Activated CD4-positive, alpha-beta T cell treated with anti-CD3 and anti-CD28 coated beads for 36 hours (primary cell): ENCODE measurements at regions of chr9 and their contacts with region 1.

Region 1: DNA sequence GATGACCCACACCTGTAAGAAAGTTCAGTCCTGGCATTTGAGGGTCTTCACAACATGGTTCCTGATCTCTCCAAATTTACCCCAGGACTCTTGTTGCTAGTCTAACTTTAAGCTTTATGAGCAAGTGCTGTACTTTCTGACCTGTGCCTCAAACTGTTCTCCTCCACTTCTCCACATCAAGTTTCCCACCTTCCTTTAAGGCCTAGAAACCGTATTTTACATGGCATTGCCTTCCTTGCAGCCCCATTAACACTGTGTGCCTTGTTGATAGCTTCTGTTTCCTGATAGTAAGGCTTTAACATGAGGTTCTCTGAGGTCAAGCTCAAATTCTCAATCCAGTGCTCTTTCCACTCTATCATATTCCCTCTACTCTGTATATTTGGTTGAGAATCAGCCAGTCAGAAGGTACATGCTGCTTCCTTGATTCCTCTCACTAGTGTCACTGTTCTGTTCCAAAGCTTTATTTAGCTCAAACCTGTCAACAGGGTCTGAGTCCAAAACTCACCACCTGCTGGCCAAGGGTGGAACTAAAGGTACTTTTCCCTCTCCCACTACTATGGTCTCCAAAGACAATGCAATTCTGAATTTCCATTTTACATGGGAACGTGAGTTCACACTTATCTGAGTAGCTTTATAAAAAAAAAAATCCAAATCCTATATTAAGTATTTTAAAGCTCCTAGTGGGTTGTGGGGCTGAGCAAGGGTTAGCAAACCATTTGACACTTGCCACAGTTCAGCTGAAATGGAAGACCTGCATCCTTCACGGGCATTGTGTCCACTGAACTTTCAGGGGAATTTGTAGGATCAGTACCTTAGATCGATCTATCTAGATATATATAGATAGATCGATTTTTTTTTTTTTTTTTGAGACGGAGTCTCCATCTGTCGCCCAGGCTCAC is 21.1 kb downstream of the VCP start:
- DNase-seq: peak; percentile 76
- ATAC-seq: peak; percentile 87
- H3K4me3 Mint-ChIP-seq: no peak overlapping the region
- H3K27ac Mint-ChIP-seq: peak overlapping the region; percentile 15
- H3K4me1 Mint-ChIP-seq: no peaks in the 10 kb centered on the region
- H3K27me3 Mint-ChIP-seq: no peaks in the 10 kb centered on the region

Region 2: DNA sequence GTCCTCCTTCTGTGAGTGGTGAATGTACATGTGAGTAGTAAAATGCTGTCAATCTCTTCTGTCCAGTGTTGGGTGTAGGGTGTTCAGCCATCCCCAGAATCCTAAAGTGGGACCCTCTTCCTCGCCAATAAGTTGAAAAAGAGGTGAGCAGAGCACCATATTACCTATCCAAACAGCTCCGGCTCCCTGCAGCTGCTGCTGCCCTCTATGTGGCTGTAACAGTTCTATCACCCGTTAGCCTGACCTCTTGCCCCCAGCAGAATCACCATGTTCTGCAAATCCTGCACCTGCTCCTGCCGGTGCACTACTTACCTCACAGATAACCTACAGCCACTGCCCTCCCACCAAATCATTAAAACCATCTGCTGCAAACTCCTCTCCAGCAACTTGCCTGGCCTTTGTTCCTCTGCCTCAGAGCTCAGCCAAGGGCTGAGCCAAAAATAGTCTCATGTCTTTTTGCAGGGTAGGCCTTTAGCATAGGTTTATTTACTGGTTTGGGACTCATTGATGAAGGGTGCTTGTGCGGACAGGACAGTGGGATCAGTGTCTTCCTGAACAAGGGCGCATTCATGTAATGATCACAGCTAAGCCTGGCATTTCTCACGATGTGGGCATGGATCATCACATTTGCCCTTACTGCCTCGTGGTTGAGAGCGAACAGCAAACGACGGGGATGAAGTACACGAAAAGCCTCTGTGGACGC is 291.7 kb before region 1 on chr9:
- CTCF ChIA-PET with region 1: interaction called, 5 read pairs
- POLR2A ChIA-PET with region 1: no interaction called
- intact Hi-C with region 1: loop called in 1 of 2 experiments (anchors 1 kb)
- DNase-seq: no peak
- ATAC-seq: no peak
- H3K4me3 Mint-ChIP-seq: no peak overlapping the region
- H3K27ac Mint-ChIP-seq: no peak overlapping the region
- H3K4me1 Mint-ChIP-seq: peaks cover 2% of the 10 kb centered on the region
- H3K27me3 Mint-ChIP-seq: peaks cover 22% of the 10 kb centered on the region

Region 3: DNA sequence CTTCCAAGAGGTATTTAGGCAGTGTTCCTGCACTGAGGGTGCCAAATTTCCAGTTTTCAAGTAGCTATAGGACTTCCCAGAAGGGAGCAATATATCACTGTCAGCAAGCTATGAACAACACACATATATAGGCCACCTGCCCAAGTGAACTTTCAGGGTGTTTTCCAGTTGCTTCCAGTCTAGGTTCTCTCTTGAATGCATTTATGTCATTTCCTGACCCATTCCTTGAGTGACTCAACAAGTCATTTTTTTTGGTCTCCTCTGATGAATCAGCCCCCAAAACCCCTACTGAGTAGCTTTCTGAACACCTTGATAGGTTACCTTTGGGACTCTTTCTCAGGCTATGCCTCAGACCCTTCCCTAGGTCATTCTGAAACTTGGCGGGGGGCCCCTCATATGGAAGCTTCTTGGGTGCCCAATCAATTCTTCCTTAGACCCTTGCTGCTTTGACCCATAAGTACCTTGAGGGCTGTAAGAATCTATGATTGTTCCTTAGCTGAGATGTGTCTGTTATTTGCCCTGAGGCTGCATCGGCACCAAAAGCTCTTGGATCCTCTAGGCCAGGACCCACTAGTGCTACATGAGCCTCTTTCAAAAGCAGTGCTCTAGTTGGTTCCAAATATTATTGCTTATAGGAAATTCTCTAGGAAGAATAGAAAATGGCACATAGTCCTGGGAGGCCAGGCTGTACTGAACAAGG is 49.4 kb before region 1 on chr9:
- CTCF ChIA-PET with region 1: interaction called, 11 read pairs
- POLR2A ChIA-PET with region 1: interaction called, 4 read pairs
- intact Hi-C with region 1: no loop called
- DNase-seq: peak; percentile 39
- ATAC-seq: peak; percentile 95
- H3K4me3 Mint-ChIP-seq: no peak overlapping the region
- H3K27ac Mint-ChIP-seq: peak overlapping the region; percentile 92
- H3K4me1 Mint-ChIP-seq: peaks cover 39% of the 10 kb centered on the region
- H3K27me3 Mint-ChIP-seq: no peaks in the 10 kb centered on the region